ENCODE measurements at regions of chr9 and their contacts with region 1.

Region 1: GRCh38 chr9:1490341-1491232 is 440.4 kb downstream of the DMRT2 start:
- DNase-seq: no peak
- H3K4me3 ChIP-seq: no peak overlapping the region
- H3K27ac ChIP-seq: no peak overlapping the region
- H3K4me1 ChIP-seq: no peaks in the 10 kb centered on the region
- H3K27me3 ChIP-seq: no peaks in the 10 kb centered on the region
- CTCF ChIP-seq: no peak

Region 2: DNA sequence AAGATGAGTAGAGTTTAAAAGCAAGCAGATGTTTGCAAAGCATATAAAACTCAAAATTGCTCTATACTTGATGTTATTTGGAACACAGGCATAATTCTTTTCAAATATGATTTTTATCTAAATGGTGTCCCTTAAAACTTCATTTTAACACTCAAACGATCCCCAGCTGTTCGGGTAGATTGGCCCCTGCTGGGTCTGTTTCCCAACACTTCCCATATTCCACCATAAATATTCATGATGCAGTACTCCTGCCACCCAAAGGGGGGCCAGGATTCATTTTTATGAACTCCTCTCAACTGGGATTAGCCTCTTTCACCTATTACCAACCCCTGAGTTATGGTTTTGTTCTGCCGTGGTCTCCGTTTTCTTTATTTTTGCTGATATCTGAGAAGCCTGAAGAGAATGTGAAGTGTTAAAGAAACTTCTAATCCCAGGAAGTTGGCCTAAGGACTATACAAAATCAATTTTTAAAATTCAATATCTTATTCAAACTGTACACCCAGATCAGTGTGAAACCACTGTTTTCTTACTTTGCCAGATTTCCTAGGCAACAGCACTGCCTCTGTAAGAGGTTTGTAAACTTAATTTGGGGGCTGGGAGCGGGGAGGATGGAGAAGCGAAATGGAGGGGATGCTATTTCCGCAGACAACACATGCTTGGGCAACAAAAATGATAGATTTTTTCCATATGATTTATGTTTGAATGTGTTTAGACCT is 56.4 kb before region 1 on chr9:
- CTCF ChIA-PET with region 1: no interaction called
- POLR2A ChIA-PET with region 1: no interaction called
- intact Hi-C with region 1: loop called (anchors 10 kb)
- DNase-seq: peak; percentile 60
- H3K4me3 ChIP-seq: no peak overlapping the region
- H3K27ac ChIP-seq: no peak overlapping the region
- H3K4me1 ChIP-seq: peaks cover 11% of the 10 kb centered on the region
- H3K27me3 ChIP-seq: peaks cover 3% of the 10 kb centered on the region
- CTCF ChIP-seq: peak; percentile 31; the same call in 1 of the 2 replicates